ENCODE measurements at regions of chr9 and their contacts with region 1.

Region 1: GRCh38 chr9:99253772-99254431 is 31.8 kb downstream of the SEC61B start:
- DNase-seq: peak; percentile 74
- ATAC-seq: peak; percentile 83
- H3K4me3 Mint-ChIP-seq: peak overlapping the region; percentile 70
- H3K27ac Mint-ChIP-seq: peak overlapping the region; percentile 83
- H3K4me1 Mint-ChIP-seq: peaks cover 28% of the 10 kb centered on the region
- H3K27me3 Mint-ChIP-seq: no peaks in the 10 kb centered on the region

Region 2: GRCh38 chr9:99221621-99222415 is 32.1 kb before region 1 on chr9 and contains the starts of genes ALG2 and SEC61B:
- POLR2A ChIA-PET with region 1: interaction called, 13 read pairs
- DNase-seq: peak; percentile 91
- ATAC-seq: peak; percentile 92
- H3K4me3 Mint-ChIP-seq: peak within 1 kb of the TSS; percentile 97
- H3K27ac Mint-ChIP-seq: peak within 1 kb of the TSS; percentile 99
- H3K4me1 Mint-ChIP-seq: peaks cover 48% of the 10 kb centered on the region
- H3K27me3 Mint-ChIP-seq: no peaks in the 10 kb centered on the region
- total RNA-seq, gene ALG2: 21.7 to 23.7 TPM
- total RNA-seq, gene SEC61B: 83.8 to 87.8 TPM

Region 3: DNA sequence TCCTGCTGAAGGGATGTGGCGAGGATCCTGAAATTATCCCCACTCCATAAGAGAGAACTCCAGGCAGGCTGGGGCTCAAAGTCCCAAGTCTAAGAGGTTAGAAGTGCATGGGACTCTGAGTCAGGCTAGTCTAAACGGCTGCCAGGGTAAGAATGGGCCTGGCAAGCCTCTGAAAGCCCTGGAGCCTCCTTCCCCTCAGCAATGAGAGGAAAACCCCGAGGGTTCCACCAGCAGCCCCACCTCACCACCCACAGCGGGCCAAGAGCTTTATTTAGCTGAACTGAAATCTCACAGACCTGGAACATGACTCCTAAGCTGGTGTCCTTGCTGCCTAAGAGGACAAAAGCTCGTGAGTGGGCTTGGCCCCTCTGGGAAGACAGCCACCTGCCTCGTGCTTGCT is 103.7 kb after region 1 on chr9:
- POLR2A ChIA-PET with region 1: no interaction called
- DNase-seq: no peak
- ATAC-seq: no peak
- H3K4me3 Mint-ChIP-seq: no peak overlapping the region
- H3K27ac Mint-ChIP-seq: no peak overlapping the region
- H3K4me1 Mint-ChIP-seq: peaks cover 2% of the 10 kb centered on the region
- H3K27me3 Mint-ChIP-seq: peaks cover 42% of the 10 kb centered on the region